GM12878 (cell line): ENCODE measurements at regions of chr2 and their contacts with region 1.

Region 1: DNA sequence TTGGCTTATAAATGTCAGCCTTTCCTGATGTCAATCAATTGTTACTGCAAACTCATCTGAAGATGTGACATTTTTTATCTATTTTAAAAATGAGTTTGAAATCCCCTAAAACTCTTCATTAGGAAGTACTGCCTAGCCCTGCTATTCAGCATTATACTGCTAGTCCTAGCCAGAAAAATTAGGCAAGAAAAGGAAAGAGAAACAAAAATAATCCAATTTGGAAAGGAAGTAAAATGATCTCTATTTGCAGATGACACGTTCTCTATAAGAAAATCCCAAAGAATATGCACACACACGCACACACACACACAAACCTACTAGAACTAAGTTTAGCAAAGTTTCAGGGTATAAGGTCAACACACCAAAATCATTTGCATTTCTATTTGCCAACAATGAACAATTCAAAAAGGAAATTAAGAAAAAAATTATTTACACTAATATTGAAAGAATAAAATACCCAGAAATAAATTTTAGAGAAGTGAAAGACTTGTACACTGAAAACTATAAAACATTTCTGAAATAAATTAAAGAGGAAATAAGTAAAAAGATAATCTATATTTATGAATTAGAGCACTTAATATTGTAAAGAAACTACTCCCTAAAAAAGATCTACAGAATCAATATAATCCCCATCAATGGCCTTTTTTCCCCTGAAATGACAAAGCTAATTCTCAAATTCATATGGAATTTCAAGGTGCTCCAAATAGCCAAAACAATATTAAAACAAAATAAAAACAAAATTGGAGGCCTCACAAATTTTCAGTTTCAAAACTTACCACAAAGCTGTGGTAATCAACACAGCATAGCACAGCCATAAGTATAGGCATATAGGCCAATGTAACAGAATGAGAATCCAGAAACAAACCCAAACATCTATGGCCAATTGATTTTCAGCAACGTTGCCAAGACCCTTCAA is 433.7 kb upstream of the TRIB2 start:
- DNase-seq: no peak
- ATAC-seq: peak; percentile 95
- H3K4me3 ChIP-seq: 0 out of 2 replicates have a peak overlapping the region, but pooled peaks have one; percentile 22
- H3K27ac ChIP-seq: no peak overlapping the region; the same call in 1 of the 2 replicates
- H3K4me1 ChIP-seq: peaks cover 16% of the 10 kb centered on the region
- H3K27me3 ChIP-seq: no peaks in the 10 kb centered on the region
- CTCF ChIP-seq: no peak
- EP300 ChIP-seq: peak in 1 of 2 experiments; percentile 46; a peak in 1 of 4 replicates
- POLR2A ChIP-seq: no peak
- RAD21 ChIP-seq: no peak

Region 2: DNA sequence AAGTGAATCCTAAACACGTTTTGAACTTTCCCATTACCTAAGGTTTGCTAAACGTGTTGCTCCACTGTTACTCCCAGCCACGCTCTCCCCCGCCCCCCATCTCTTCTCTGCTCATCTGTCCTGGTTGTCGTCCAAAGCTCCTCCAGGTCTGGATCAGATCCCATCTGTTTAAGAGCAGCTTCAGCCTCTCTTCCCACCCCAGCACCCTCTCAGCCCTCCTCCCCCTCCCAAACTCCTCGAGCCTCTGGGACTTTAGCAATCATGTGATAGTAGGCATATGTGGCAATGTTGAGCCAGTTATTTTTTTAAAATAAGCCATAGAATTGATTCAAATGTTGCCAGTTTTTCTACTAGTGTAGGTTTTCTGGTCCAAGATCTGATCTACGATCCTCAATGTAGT is 556.7 kb before region 1 on chr2:
- CTCF ChIA-PET with region 1: no interaction called
- POLR2A ChIA-PET with region 1: no interaction called
- RAD21 ChIA-PET with region 1: no interaction called
- SMC1A ChIA-PET with region 1: no interaction called
- in situ Hi-C with region 1: no loop called
- intact Hi-C with region 1: no loop called
- DNase-seq: no peak
- ATAC-seq: no peak
- H3K4me3 ChIP-seq: no peak overlapping the region
- H3K27ac ChIP-seq: no peak overlapping the region
- H3K4me1 ChIP-seq: no peaks in the 10 kb centered on the region
- H3K27me3 ChIP-seq: peaks cover 0 to 7% of the 10 kb centered on the region in 2 experiments; a peak in 1 of 4 replicates
- CTCF ChIP-seq: no peak
- EP300 ChIP-seq: no peak
- POLR2A ChIP-seq: no peak
- RAD21 ChIP-seq: no peak

Region 3: GRCh38 chr2:12416600-12416999 is 133.6 kb after region 1 on chr2:
- CTCF ChIA-PET with region 1: no interaction called
- POLR2A ChIA-PET with region 1: no interaction called
- RAD21 ChIA-PET with region 1: no interaction called
- SMC1A ChIA-PET with region 1: no interaction called
- in situ Hi-C with region 1: no loop called
- intact Hi-C with region 1: loop called (anchors 5 kb)
- DNase-seq: no peak
- ATAC-seq: peak; percentile 14; the same call in 2 of the 3 replicates
- H3K4me3 ChIP-seq: no peak overlapping the region
- H3K27ac ChIP-seq: no peak overlapping the region
- H3K4me1 ChIP-seq: peaks cover 13% of the 10 kb centered on the region; the same call in 1 of the 2 replicates
- H3K27me3 ChIP-seq: no peaks in the 10 kb centered on the region
- CTCF ChIP-seq: peak; percentile 17 to 30 (median 25); a peak in 4 of 6 replicates
- EP300 ChIP-seq: no peak
- POLR2A ChIP-seq: no peak
- RAD21 ChIP-seq: peak; percentile 50

Region 4: GRCh38 chr2:12636837-12637581 is 354.0 kb after region 1 on chr2:
- CTCF ChIA-PET with region 1: no interaction called
- POLR2A ChIA-PET with region 1: no interaction called
- RAD21 ChIA-PET with region 1: no interaction called
- SMC1A ChIA-PET with region 1: no interaction called
- in situ Hi-C with region 1: no loop called
- intact Hi-C with region 1: no loop called
- DNase-seq: no peak
- ATAC-seq: no peak
- H3K4me3 ChIP-seq: no peak overlapping the region
- H3K27ac ChIP-seq: no peak overlapping the region
- H3K4me1 ChIP-seq: no peaks in the 10 kb centered on the region
- H3K27me3 ChIP-seq: no peaks in the 10 kb centered on the region; a peak in 1 of 4 replicates
- CTCF ChIP-seq: no peak
- EP300 ChIP-seq: no peak
- POLR2A ChIP-seq: no peak
- RAD21 ChIP-seq: no peak

Region 5: GRCh38 chr2:12847694-12848575 is 564.9 kb after region 1 on chr2:
- CTCF ChIA-PET with region 1: no interaction called
- POLR2A ChIA-PET with region 1: no interaction called
- RAD21 ChIA-PET with region 1: no interaction called
- SMC1A ChIA-PET with region 1: no interaction called
- in situ Hi-C with region 1: no loop called
- intact Hi-C with region 1: no loop called
- DNase-seq: no peak
- ATAC-seq: no peak
- H3K4me3 ChIP-seq: no peak overlapping the region
- H3K27ac ChIP-seq: no peak overlapping the region
- H3K4me1 ChIP-seq: no peaks in the 10 kb centered on the region
- H3K27me3 ChIP-seq: no peaks in the 10 kb centered on the region
- CTCF ChIP-seq: no peak
- EP300 ChIP-seq: no peak
- POLR2A ChIP-seq: no peak
- RAD21 ChIP-seq: no peak